Psoas muscle (tissue), 8 donors: ENCODE measurements at regions of chr3 and their contacts with region 1.

Region 1: DNA sequence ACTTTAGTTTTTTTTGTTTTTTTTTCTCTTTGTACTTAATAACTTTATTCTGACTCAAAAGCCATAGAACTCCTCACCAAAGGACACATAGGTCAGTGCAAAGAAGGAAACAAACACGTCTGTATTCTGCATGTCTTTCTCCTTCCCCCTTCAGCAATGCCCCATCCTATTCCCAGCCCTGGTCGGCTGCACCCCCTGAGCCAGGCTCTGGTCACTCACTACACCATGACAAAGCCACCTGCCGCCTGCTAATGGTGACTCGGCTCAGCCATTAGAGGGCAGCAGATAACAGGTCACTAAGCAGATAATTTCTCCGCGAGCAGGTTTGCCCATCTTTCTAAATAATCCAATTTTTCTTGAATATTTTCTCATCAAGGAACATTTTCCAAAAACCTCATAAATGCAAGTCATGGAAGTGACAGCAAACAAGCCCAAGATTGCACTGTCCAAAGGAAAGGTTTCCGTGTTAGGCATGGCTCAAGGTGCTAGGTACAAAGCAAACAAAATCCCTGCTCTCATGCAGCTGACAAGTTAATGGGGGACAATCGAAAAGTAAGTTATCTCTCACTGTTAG is 37.8 kb downstream of the TM4SF4 start:
- DNase-seq: peak; percentile 39 to 64
- ATAC-seq: peak; percentile 51 to 78 (median 70)
- H3K4me3 ChIP-seq: no peak overlapping the region
- H3K27ac ChIP-seq: no peak overlapping the region
- H3K4me1 ChIP-seq: peaks cover 13% of the 10 kb centered on the region
- H3K27me3 ChIP-seq: no peaks in the 10 kb centered on the region
- CTCF ChIP-seq: peak; percentile 88

Region 2: DNA sequence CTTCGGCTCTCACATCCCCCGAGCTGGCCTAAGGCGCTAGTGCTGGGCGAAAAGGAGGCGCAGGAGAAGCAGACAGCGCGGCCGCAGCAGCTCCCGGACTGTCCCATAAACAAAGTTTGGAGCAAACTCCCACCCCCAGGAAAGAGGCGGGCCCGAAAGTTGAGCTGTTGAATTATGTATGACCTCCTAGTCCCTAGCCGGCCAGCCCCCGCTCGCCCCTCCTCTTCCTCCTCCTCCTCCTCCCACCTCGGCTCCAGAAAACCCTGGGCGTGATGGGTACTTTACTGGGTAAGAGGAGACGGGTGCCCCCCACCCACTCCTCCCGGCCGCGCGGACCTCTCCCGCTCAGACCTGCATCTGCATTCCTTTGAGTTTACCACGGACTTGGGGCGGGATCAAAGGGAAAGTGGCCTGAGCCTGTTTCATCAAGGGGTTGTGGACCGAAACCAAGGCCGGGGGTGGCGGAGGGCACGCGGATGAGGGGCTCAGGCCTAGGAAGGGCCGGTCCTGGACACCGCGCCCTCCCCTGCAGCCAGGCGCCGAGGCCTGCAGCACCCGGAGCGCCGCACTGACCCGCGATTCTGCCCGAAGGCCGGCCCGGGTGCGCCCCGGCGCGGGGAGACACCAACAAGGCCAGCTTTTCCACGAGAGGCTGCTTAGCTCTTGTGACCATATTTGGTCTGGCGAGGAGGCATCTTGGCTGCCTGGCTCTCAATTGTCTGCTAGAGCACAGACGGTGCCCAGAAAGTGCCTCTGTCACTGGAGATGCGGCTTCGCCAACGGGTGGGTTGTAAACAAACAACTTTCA is 145.8 kb after region 1 on chr3 and contains the start of gene WWTR1:
- intact Hi-C with region 1: no loop called
- DNase-seq: peak; percentile 91 to 92
- ATAC-seq: peak; percentile 86 to 88 (median 87)
- H3K4me3 ChIP-seq: peak within 1 kb of the TSS; percentile 86
- H3K27ac ChIP-seq: peak within 1 kb of the TSS; percentile 90
- H3K4me1 ChIP-seq: peaks cover 23% of the 10 kb centered on the region
- H3K27me3 ChIP-seq: no peaks in the 10 kb centered on the region
- CTCF ChIP-seq: peak; percentile 24
- total RNA-seq, gene WWTR1: 13.3 to 52.9 (median 30.1) TPM

Region 3: GRCh38 chr3:149717391-149718056 is 205.2 kb after region 1 on chr3:
- intact Hi-C with region 1: loop called (anchors 2 to 5 kb)
- DNase-seq: no peak
- ATAC-seq: peak; percentile 55 to 74 (median 70)
- H3K4me3 ChIP-seq: no peak overlapping the region
- H3K27ac ChIP-seq: no peak overlapping the region
- H3K4me1 ChIP-seq: no peaks in the 10 kb centered on the region
- H3K27me3 ChIP-seq: no peaks in the 10 kb centered on the region
- CTCF ChIP-seq: peak; percentile 82